Activated CD4-positive, alpha-beta memory T cell treated with anti-CD3 and anti-CD28 coated beads for 36 hours (primary cell): ENCODE measurements at regions of chr5 and their contacts with region 1.

Region 1: GRCh38 chr5:139138809-139139208 is 59.4 kb downstream of the SIL1 start:
- DNase-seq: no peak
- H3K4me3 Mint-ChIP-seq: no peak overlapping the region
- H3K27ac Mint-ChIP-seq: no peak overlapping the region
- H3K4me1 Mint-ChIP-seq: peaks cover 14% of the 10 kb centered on the region
- H3K27me3 Mint-ChIP-seq: no peaks in the 10 kb centered on the region

Region 2: GRCh38 chr5:139197710-139198669 is 59.2 kb after region 1 on chr5 and contains the start of gene SIL1:
- CTCF ChIA-PET with region 1: no interaction called
- POLR2A ChIA-PET with region 1: no interaction called
- intact Hi-C with region 1: loop called (anchors 2 kb)
- DNase-seq: peak; percentile 99
- H3K4me3 Mint-ChIP-seq: peak within 1 kb of the TSS; percentile 98
- H3K27ac Mint-ChIP-seq: peak within 1 kb of the TSS; percentile 95
- H3K4me1 Mint-ChIP-seq: peaks cover 20% of the 10 kb centered on the region
- H3K27me3 Mint-ChIP-seq: no peaks in the 10 kb centered on the region
- total RNA-seq, gene SIL1: 27.2 to 30.3 TPM